ENCODE measurements at regions of chr16 and their contacts with region 1.

Region 1: GRCh38 chr16:25066747-25067631 is 44.6 kb upstream of the LCMT1 start:
- DNase-seq: peak; percentile 66 to 86 (median 76)
- ATAC-seq: peak; percentile 98
- H3K4me3 ChIP-seq: peak overlapping the region; percentile 85
- H3K4me3 Mint-ChIP-seq: peak overlapping the region; percentile 82 to 99 (median 92)
- H3K27ac ChIP-seq: peak overlapping the region; percentile 76
- H3K27ac Mint-ChIP-seq: peak overlapping the region; percentile 85 to 100 (median 93)
- H3K4me1 ChIP-seq: peaks cover 17 to 33% of the 10 kb centered on the region in 2 donors
- H3K4me1 Mint-ChIP-seq: peaks cover 30 to 72% (median 52%) of the 10 kb centered on the region in 7 donors
- H3K27me3 ChIP-seq: no peaks in the 10 kb centered on the region
- H3K27me3 Mint-ChIP-seq: peaks cover 0 to 2% (median 0%) of the 10 kb centered on the region in 5 donors

Region 2: GRCh38 chr16:25031441-25032307 is 35.3 kb before region 1 on chr16:
- CTCF ChIA-PET with region 1: no interaction called
- POLR2A ChIA-PET with region 1: interaction called, 4 read pairs
- intact Hi-C with region 1: loop called in 1 of 2 experiments (anchors 1 kb)
- DNase-seq: peak; percentile 70 to 95 (median 93)
- ATAC-seq: peak; percentile 100
- H3K4me3 ChIP-seq: peak overlapping the region; percentile 86
- H3K4me3 Mint-ChIP-seq: peak overlapping the region; percentile 84 to 99 (median 96)
- H3K27ac ChIP-seq: peak overlapping the region; percentile 76
- H3K27ac Mint-ChIP-seq: peak overlapping the region; percentile 81 to 98 (median 95)
- H3K4me1 ChIP-seq: peaks cover 13 to 20% of the 10 kb centered on the region in 2 donors
- H3K4me1 Mint-ChIP-seq: peaks cover 24 to 59% (median 36%) of the 10 kb centered on the region in 7 donors
- H3K27me3 ChIP-seq: no peaks in the 10 kb centered on the region
- H3K27me3 Mint-ChIP-seq: no peaks in the 10 kb centered on the region

Region 3: DNA sequence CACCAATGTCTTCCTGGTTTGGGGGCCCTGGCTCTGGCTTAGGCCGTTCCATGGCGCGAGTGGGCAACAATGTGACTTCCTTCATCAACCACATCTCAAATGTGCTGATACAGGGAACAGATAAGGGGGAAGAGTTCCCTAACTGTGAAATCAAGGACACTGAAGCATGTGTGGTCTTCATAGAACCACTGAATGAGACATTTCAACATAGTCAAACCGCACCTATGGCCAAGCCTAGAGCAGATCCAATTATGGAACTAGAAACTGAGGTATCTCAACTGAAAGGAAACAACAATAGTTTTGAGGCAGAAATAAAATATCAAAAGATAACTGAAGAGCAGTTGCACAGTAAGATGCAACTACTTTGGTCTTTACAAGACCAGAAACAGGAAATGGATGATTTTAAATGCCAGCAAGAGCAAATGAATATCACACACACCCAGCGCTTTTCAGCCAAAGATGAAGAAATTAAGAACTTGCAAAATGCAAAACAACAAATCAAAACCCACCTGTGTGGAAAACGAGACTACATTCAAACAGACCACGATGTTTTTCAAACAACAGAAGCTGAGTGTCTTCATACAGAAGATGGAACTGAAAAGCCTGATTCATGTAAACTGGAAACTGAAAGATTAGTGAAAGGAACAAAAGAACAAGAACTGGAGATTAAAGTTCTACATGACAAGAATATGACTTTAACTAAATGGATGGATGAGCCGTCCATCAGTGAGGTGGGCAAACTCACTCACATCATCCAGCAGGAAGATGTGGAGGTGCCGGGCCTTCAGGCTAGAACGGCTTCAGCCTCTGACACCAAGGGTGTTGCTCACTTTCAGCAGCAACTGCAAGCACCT is 26.4 kb after region 1 on chr16:
- CTCF ChIA-PET with region 1: interaction called, 3 read pairs
- POLR2A ChIA-PET with region 1: interaction called, 22 read pairs
- intact Hi-C with region 1: no loop called
- DNase-seq: peak in 5 of 9 donors; percentile 15 to 49 (median 37)
- ATAC-seq: peak; percentile 68
- H3K4me3 ChIP-seq: no peak overlapping the region
- H3K4me3 Mint-ChIP-seq: peak overlapping the region; percentile 1 to 83 (median 62)
- H3K27ac ChIP-seq: peak overlapping the region; percentile 69
- H3K27ac Mint-ChIP-seq: peak overlapping the region; percentile 82 to 98 (median 92)
- H3K4me1 ChIP-seq: peaks cover 0 to 20% of the 10 kb centered on the region in 2 donors
- H3K4me1 Mint-ChIP-seq: peaks cover 21 to 44% (median 39%) of the 10 kb centered on the region in 7 donors
- H3K27me3 ChIP-seq: no peaks in the 10 kb centered on the region
- H3K27me3 Mint-ChIP-seq: no peaks in the 10 kb centered on the region

Region 4: GRCh38 chr16:25257504-25257955 is 190.5 kb after region 1 on chr16 and contains the start of gene ZKSCAN2:
- CTCF ChIA-PET with region 1: no interaction called
- POLR2A ChIA-PET with region 1: no interaction called
- intact Hi-C with region 1: loop called in 1 of 2 experiments (anchors 1 kb)
- DNase-seq: peak; percentile 66 to 90 (median 76)
- ATAC-seq: peak; percentile 89
- H3K4me3 ChIP-seq: peak within 1 kb of the TSS; percentile 90
- H3K4me3 Mint-ChIP-seq: peak within 1 kb of the TSS; percentile 90 to 98 (median 96)
- H3K27ac ChIP-seq: peak within 1 kb of the TSS; percentile 93
- H3K27ac Mint-ChIP-seq: peak within 1 kb of the TSS; percentile 95 to 98 (median 96)
- H3K4me1 ChIP-seq: peaks cover 16 to 39% of the 10 kb centered on the region in 2 donors
- H3K4me1 Mint-ChIP-seq: peaks cover 48 to 74% (median 66%) of the 10 kb centered on the region in 7 donors
- H3K27me3 ChIP-seq: no peaks in the 10 kb centered on the region
- H3K27me3 Mint-ChIP-seq: no peaks in the 10 kb centered on the region
- total RNA-seq, gene ZKSCAN2: 4.7 to 7.0 (median 5.2) TPM

Measured in naive thymus-derived CD4-positive, alpha-beta T cell (primary cell).